ENCODE measurements at regions of chr1 and their contacts with region 1.

Region 1: GRCh38 chr1:27111626-27112573 is 43.0 kb downstream of the SLC9A1 start:
- DNase-seq: peak; percentile 90 to 97
- ATAC-seq: peak; percentile 95
- H3K4me3 ChIP-seq: no peak overlapping the region
- H3K27ac ChIP-seq: peak overlapping the region; percentile 71 to 83 (median 78)
- H3K4me1 ChIP-seq: peaks cover 29 to 36% of the 10 kb centered on the region in 2 donors
- H3K27me3 ChIP-seq: no peaks in the 10 kb centered on the region
- CTCF ChIP-seq: peak; percentile 12 to 53 (median 37)
- POLR2A ChIP-seq: no peak

Region 2: GRCh38 chr1:27141151-27142003 is 29.5 kb after region 1 on chr1:
- in situ Hi-C with region 1: no loop called
- intact Hi-C with region 1: loop called (anchors 2 kb)
- DNase-seq: peak; percentile 90 to 97
- ATAC-seq: peak; percentile 82 to 85
- H3K4me3 ChIP-seq: no peak overlapping the region
- H3K27ac ChIP-seq: peak overlapping the region; percentile 78 to 87 (median 84)
- H3K4me1 ChIP-seq: peaks cover 89 to 98% of the 10 kb centered on the region in 2 donors
- H3K27me3 ChIP-seq: no peaks in the 10 kb centered on the region
- CTCF ChIP-seq: no peak
- POLR2A ChIP-seq: no peak

Region 3: DNA sequence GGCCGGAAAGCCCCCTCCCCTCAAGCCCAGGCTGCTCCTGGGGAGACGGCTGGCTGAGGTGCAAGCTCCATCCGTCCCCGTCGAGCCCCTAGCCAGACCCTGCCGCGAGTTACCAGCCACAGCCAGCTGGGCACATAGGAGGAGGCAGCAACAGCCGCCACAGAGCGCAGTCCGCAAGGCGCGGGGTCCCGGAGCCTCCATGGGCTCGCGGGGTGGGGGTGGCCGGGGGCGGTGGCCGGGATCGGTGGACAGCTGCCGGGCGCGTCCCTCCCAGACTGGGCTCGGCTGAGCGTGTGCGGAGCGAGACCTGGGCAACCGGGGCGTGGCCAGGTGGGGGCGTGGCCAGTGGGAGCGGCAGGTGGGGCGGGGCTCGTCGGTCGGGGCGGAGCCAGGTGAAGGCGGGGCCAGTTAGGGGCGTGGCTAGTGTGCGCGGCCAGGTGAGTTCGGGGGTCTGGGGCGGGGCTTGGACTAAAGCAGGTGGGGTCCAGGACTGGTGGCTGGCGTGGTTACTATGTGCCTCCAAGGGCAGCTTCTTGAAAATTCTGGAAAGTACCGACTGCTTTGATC is 271.2 kb after region 1 on chr1 and contains the start of gene CD164L2:
- in situ Hi-C with region 1: no loop called
- intact Hi-C with region 1: no loop called
- DNase-seq: no peak
- ATAC-seq: no peak
- H3K4me3 ChIP-seq: no peak within 1 kb of the TSS
- H3K27ac ChIP-seq: no peak within 1 kb of the TSS
- H3K4me1 ChIP-seq: peaks cover 9 to 14% of the 10 kb centered on the region in 2 donors
- H3K27me3 ChIP-seq: peaks cover 0 to 5% (median 0%) of the 10 kb centered on the region in 3 donors
- CTCF ChIP-seq: no peak
- POLR2A ChIP-seq: no peak
- total RNA-seq, gene CD164L2: not detected

Measured in gastrocnemius medialis (tissue), 4 donors.